Cardiac septum (tissue), 1 donor: ENCODE measurements at regions of chr1 and their contacts with region 1.

Region 1: DNA sequence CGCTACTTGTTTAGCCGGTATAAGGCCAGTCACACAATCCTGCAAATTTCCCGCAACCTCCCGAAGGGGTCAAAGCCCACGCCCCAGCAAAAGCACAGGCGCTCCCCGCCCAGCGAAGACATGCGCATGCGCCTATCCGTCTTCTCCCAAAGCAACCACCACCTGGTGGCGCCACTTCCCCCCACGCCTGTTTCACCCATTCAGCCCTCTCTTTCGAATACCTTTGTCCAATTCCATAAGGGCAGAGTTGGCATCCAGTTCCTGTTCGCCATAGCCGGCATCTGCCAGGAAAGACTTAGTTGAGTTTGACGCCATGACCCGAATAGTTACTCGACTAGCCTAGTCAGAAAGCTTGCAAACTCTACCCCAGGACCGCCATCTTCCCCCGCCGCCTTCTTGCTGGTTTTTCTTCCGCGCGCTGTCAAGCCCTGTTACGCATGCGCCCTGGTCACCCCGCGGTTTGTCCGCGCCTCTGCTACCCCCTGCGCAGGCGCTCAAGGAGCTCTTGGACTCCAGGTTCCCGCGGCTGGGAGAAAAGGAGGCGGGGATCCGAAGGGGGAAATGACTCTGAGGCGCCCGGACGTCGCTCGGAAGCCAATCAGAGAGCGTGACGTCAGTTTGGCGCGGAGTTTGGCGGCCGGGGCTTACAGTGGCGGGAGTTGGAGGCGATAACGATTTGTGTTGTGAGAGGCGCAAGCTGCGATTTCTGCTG is at the starts of genes DTL and INTS7:
- DNase-seq: peak; percentile 99
- total RNA-seq, gene DTL: 0.48 TPM
- total RNA-seq, gene INTS7: 8.4 TPM

Region 2: DNA sequence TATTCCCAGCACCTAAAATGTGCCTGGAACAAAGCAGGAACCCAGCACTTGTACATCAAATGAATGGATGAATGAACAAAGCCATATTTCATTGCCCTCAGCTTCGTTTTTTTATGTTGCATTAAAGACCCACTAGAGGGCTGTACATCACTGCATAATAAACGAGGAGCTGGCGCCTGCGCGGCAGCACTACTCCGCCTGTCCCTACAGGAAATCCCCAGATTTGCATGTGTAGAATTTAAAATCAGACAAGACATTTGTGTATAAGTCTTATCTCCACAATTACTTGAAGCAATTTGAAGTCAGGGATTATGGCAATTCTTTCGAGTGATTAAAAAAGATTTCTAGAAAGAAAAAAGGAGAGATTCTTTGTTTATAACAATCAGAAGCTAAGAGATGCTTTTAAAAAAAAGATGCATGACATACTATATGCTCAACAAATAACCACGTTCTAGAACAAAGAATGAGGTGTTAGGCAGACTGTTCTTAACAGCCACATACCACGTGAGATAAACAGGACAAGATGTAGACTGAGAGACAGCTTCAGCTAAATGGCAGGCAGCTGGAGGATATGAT is 354.4 kb before region 1 on chr1:
- intact Hi-C with region 1: loop called (anchors 5 kb)
- DNase-seq: no peak

Region 3: DNA sequence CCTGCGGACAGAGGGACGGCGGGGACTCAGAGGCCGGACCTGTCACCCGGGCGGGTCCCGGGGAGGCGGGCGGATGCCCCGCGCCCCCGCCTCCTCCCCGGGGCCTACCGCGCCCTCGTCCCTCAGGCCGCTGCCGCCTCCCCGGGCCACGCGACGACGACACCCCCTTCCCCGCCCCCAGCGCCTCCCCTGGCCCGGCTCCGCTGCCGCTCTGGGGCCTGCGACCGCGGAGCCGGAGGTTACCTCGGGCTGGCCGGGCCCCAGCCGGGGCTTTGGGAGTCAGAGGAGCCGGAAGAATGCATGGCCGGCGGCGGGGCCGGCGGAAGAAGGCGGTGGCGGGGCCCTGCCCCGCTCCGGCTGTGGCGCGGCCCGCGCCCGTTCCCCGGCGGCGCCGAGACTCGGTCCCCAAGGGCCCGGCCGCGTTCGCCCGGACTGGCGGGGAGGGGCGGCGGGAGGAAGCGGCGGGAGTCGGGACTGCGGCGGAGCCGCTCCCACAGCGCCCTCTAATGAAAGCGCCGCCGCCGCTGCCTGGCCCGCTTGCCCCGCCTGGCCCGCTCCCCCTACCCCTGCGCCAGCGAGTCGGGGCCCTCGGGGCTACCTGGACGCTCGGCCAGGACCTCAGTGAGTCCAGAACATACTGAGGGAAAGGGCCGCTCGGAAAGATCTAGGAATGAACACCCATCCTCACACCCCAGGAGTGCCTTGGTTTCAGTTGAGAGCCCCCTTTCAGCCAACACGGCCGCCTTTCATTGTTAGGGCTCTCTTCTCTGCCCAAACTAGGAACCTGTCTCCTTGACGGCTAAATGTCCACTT is 204.7 kb before region 1 on chr1 and contains the start of gene LPGAT1:
- intact Hi-C with region 1: no loop called
- DNase-seq: peak; percentile 95
- total RNA-seq, gene LPGAT1: 43.4 TPM

Region 4: DNA sequence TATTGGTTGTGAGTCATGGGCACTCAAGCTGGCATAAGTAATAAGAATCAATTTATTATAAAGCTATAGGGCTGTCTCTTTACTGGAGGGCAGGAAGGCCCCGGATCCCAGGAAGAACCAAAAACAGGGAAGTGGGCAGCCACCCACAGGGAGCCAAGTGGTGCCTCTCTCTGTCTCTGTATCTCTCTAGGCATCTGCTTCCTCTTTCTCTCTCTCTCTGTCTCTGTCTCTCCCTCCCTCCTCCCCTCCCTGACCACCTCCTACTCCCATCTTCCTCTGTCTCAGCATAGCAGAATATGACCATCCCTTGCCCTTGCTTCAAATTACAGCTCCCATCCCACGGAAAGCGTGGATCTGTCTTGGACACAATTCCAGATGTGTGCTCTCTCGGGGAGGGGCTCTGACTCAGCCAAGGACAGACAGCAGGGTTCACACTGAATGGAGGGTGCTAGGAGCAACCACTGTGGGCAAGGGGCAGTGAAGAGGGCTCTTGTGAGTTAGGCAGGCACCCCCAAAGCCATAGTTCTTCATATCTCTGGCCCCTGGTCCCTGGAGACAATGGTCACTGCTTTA is 124.3 kb before region 1 on chr1:
- intact Hi-C with region 1: no loop called
- DNase-seq: no peak

Region 5: DNA sequence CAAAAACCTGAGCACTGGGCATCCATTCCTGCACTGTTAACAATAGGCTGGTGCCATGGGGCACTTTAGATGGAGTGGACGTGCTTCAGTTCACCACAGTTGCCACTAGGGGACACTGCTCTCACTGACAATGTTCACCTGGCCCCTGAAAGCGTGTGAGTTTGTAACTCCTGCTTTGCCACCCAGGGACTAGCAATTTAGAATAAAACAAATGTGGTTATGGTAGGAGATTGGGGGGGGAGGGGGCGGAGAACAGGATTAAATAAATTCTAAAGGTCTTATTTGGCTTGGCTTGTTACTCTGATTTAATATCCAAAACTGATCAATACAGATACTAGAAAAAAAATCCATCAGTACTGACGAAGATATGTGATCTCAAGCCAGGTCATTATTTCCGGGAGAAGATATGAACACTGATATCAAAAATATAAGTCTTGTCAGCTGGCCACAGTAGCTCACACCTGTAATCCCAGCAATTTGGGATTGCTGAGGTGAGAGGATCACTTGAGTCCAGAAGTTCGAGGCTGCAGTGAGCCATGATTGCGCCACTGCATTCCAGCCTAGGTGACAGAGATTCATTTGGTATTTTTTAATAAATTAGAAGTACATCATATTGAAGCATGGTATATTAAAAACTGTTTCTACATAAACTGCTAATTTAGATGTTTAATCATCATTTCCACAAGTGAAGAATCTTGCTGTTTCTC is 23.1 kb before region 1 on chr1:
- intact Hi-C with region 1: loop called (anchors 2 kb)
- DNase-seq: peak; percentile 80

Region 6: DNA sequence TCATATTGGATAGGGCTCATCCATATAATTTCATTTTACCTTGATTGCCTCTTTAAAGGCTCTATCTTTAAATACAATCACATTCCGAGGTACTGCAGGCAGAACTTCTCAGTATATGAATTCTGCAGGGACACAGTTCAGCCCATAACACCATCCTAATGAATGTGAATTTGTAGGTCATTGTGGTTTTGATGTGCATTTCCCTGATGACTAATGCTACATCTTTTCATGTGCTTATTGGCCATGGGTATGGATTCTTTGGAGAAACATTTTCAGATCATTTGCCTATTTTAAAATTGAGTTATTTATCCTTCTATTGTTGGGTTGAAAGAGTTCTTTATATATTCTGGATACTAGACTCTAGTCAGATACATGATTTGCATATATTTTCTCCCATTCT is 1006.2 kb after region 1 on chr1:
- intact Hi-C with region 1: no loop called
- DNase-seq: no peak